ENCODE measurements at regions of chr6 and their contacts with region 1.

Region 1: DNA sequence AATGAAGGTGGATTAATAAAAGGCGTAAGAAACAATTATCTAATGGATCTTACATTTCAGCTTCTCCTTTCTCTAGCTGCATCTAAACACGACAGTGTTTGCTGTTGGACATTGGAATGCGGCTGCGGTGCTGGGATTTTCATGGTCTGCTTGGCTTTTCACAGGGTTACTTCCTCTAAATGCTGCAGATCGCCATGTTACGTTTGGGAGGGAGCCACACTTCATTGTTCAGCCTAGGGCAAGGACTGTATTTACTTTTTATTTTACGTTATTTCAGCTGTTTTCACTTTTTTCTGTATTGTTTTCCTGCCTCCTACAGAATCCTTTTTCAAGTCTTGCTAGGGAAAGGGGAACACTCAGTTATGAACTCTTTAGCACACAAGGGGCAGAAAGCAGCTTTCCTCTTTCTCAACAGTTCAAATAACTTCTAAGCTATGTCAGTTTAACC is 97.9 kb upstream of the MTHFD1L start:
- DNase-seq: peak in 1 of 2 donors; percentile 30
- ATAC-seq: peak in 6 of 8 donors; percentile 42 to 70 (median 60)
- H3K4me3 ChIP-seq: peak overlapping the region in 1 of 10 donors; percentile 18
- H3K27ac ChIP-seq: peak overlapping the region in 9 of 10 donors; percentile 0 to 78 (median 41)
- H3K4me1 ChIP-seq: peaks cover 12 to 62% (median 40%) of the 10 kb centered on the region in 9 donors
- H3K27me3 ChIP-seq: no peaks in the 10 kb centered on the region
- CTCF ChIP-seq: no peak

Region 2: GRCh38 chr6:150692604-150693003 is 75.0 kb before region 1 on chr6:
- intact Hi-C with region 1: loop called in 1 of 10 experiments (anchors 5 kb)
- DNase-seq: no peak
- ATAC-seq: no peak
- H3K4me3 ChIP-seq: no peak overlapping the region
- H3K27ac ChIP-seq: peak overlapping the region in 1 of 10 donors; percentile 3
- H3K4me1 ChIP-seq: peaks cover 0 to 92% (median 40%) of the 10 kb centered on the region in 9 donors
- H3K27me3 ChIP-seq: no peaks in the 10 kb centered on the region
- CTCF ChIP-seq: no peak

Region 3: GRCh38 chr6:150720774-150721233 is 46.8 kb before region 1 on chr6:
- intact Hi-C with region 1: no loop called
- DNase-seq: no peak
- ATAC-seq: peak in 6 of 8 donors; percentile 18 to 67 (median 54)
- H3K4me3 ChIP-seq: no peak overlapping the region
- H3K27ac ChIP-seq: peak overlapping the region in 1 of 10 donors; percentile 21
- H3K4me1 ChIP-seq: peaks cover 0 to 47% (median 6%) of the 10 kb centered on the region in 9 donors
- H3K27me3 ChIP-seq: no peaks in the 10 kb centered on the region
- CTCF ChIP-seq: peak in 1 of 9 donors; percentile 5

Region 4: GRCh38 chr6:151723152-151723551 is 955.6 kb after region 1 on chr6:
- intact Hi-C with region 1: no loop called
- DNase-seq: no peak
- ATAC-seq: no peak
- H3K4me3 ChIP-seq: no peak overlapping the region
- H3K27ac ChIP-seq: no peak overlapping the region
- H3K4me1 ChIP-seq: no peaks in the 10 kb centered on the region
- H3K27me3 ChIP-seq: peaks cover 0 to 2% (median 0%) of the 10 kb centered on the region in 7 donors
- CTCF ChIP-seq: no peak

Measured in heart right ventricle (tissue), 16 donors.